ENCODE measurements at regions of chr16 and their contacts with region 1.

Region 1: DNA sequence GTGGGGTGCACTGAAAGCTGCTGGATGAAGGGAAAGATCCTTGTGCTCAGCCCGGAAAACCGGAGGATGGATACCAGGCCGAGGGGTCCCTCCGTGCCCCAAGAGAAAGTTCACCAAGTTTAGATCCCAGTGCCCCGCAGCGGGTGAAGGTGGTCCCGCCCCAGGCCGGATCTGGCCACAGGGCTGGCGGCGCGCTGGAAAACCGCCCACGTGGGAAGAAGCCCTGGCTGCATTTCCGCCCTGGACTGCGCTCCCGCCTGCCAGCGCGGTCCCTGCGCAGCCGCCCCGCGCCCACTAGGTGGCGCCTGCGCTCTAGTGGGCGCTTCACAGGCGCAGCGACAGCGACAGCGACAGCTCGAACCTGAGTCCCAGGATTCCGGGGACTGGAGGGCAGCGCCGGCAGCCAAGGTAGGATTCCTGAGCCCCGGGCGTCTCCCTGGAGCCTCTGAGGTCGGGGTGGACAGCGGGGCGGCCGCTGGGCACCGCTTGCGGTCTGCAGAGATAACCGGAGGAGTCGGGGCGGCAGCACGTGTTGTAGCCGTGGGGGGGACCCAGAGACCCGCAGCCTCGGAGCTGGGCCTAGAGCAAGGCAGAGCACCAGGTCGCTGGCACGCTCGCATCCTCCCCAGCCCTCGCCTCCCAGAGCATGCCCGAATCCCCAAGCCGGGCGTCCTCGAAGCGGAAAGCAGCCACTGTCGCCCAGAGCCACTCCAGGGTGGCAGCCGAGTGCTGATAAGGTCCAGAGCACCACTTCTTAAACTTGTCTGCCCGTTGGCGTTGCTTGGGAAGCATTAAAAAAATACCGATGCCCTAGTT is at the start of gene CHD9:
- DNase-seq: peak; percentile 74
- ATAC-seq: peak; percentile 91
- H3K4me3 Mint-ChIP-seq: peak within 1 kb of the TSS; percentile 82
- H3K27ac Mint-ChIP-seq: peak within 1 kb of the TSS; percentile 87
- H3K4me1 Mint-ChIP-seq: peaks cover 26% of the 10 kb centered on the region
- H3K27me3 Mint-ChIP-seq: peaks cover 3% of the 10 kb centered on the region
- CTCF ChIP-seq: peak; percentile 99
- total RNA-seq, gene CHD9: 13.8 to 16.3 TPM

Region 2: DNA sequence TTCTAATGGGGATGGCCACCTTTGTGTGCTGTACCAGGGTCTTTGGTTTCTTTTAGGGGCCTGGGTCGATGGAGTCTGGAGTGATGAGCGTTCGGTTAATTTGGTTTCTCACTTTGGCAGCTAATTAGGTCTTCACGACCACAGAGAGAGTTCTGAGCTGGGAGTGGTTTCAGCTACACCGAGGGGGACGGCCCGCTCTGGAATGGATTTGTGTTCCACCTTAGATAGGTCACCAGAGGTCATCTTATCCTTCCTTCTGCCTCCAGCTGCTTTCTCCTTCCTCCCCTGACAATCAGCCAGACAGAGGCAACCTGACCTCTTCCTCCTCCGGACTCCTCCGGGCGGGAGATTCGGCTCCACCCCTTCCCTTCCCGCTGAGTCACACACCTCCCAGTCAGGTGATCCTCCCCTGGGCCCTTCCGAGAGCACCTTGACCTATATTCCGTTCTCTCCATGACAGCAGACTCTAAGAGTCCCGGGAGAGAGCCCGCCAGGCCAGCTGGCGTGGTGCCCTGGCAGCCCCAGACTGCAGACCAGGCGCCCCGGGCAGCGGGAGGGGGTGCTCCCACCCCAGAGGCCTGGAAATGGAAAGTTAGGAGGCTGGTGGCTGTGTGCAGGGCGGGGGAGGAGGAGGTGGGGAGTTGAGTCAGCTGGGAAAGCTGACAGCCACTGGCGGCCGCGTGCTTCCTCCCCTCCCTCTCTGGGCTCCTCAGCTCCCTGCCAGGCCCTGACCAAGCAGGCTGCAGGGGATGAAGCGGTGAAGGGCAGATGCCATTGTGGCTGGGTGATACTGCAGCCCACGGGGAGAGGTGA is 44.6 kb after region 1 on chr16:
- CTCF ChIA-PET with region 1: interaction called, 10 read pairs
- POLR2A ChIA-PET with region 1: no interaction called
- intact Hi-C with region 1: no loop called
- DNase-seq: peak; percentile 78
- ATAC-seq: peak; percentile 80
- H3K4me3 Mint-ChIP-seq: peak overlapping the region; percentile 68
- H3K27ac Mint-ChIP-seq: peak overlapping the region; percentile 89
- H3K4me1 Mint-ChIP-seq: peaks cover 22% of the 10 kb centered on the region
- H3K27me3 Mint-ChIP-seq: no peaks in the 10 kb centered on the region
- CTCF ChIP-seq: no peak

Region 3: GRCh38 chr16:53154513-53154912 is 99.6 kb after region 1 on chr16:
- CTCF ChIA-PET with region 1: interaction called, 35 read pairs
- POLR2A ChIA-PET with region 1: interaction called, 3 read pairs
- intact Hi-C with region 1: loop called (anchors 5 kb)
- DNase-seq: no peak
- ATAC-seq: no peak
- H3K4me3 Mint-ChIP-seq: no peak overlapping the region
- H3K27ac Mint-ChIP-seq: no peak overlapping the region
- H3K4me1 Mint-ChIP-seq: peaks cover 3% of the 10 kb centered on the region
- H3K27me3 Mint-ChIP-seq: no peaks in the 10 kb centered on the region
- CTCF ChIP-seq: no peak

Region 4: DNA sequence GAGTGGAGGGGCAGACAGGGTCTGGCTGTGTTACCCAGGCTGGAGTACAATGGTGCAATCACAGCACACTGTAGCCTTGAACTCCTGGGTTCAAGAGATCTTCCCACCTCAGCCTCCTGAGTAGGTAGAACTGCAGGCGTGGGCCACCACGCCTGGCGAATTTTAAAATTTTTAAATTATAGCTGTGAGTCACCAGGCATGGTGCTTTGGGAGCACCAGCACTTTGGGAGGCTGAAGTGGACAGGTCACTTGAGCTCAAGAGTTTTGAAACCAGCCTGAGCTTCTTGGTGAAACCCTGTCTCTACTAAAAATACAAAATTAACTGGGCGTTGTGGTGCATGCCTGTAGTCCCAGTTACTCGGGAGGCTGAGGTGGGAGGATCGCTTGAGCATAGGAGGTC is 113.9 kb after region 1 on chr16:
- CTCF ChIA-PET with region 1: interaction called, 16 read pairs
- POLR2A ChIA-PET with region 1: no interaction called
- intact Hi-C with region 1: no loop called
- DNase-seq: no peak
- ATAC-seq: no peak
- H3K4me3 Mint-ChIP-seq: no peak overlapping the region
- H3K27ac Mint-ChIP-seq: no peak overlapping the region
- H3K4me1 Mint-ChIP-seq: peaks cover 7% of the 10 kb centered on the region
- H3K27me3 Mint-ChIP-seq: no peaks in the 10 kb centered on the region
- CTCF ChIP-seq: no peak

Region 5: GRCh38 chr16:53207810-53208752 is 153.2 kb after region 1 on chr16:
- CTCF ChIA-PET with region 1: interaction called, 17 read pairs
- POLR2A ChIA-PET with region 1: interaction called, 3 read pairs
- intact Hi-C with region 1: loop called (anchors 5 kb)
- DNase-seq: peak; percentile 32
- ATAC-seq: peak; percentile 64
- H3K4me3 Mint-ChIP-seq: peak overlapping the region; percentile 64
- H3K27ac Mint-ChIP-seq: peak overlapping the region; percentile 86
- H3K4me1 Mint-ChIP-seq: peaks cover 13% of the 10 kb centered on the region
- H3K27me3 Mint-ChIP-seq: no peaks in the 10 kb centered on the region
- CTCF ChIP-seq: peak; percentile 11

Region 6: DNA sequence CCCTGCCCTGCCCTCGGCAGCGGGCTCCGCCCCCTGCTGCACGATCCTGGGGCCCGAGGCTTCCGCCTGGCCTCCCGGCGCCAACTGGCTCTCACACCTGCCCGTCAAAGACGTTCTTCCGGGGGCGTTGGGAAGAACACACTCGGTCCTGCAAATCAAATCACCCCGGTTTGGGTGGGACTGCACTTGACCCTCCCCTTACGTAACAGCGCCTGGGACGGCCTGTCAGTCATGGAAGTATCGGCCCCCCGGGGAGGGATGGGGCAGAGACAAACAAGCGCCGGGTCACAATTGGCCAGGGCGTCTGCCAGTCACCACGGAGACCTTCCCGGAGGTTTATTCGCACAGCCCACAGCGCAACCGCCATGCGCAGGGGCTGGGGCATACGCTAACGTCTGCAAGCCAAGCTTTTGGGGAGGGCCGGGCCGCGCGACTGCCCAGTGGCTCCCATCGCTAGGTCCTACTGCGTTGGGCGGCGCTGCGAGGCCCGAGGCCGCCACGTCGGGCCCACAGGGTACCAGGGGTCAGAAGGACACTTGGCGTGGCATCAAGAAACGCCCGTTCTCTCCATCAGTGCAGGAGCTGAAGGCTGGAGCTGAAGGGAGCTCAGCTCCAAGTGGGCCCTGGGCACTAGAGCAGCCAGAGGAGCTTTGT is 448.5 kb after region 1 on chr16:
- CTCF ChIA-PET with region 1: interaction called, 3 read pairs
- POLR2A ChIA-PET with region 1: interaction called, 3 read pairs
- intact Hi-C with region 1: loop called (anchors 10 kb)
- DNase-seq: peak; percentile 100
- ATAC-seq: peak; percentile 92
- H3K4me3 Mint-ChIP-seq: peak overlapping the region; percentile 95
- H3K27ac Mint-ChIP-seq: peak overlapping the region; percentile 88
- H3K4me1 Mint-ChIP-seq: peaks cover 46% of the 10 kb centered on the region
- H3K27me3 Mint-ChIP-seq: no peaks in the 10 kb centered on the region
- CTCF ChIP-seq: no peak

Measured in activated CD8-positive, alpha-beta T cell treated with anti-CD3 and anti-CD28 coated beads for 36 hours (primary cell).